ENCODE measurements at regions of chr5 and their contacts with region 1.

Region 1: DNA sequence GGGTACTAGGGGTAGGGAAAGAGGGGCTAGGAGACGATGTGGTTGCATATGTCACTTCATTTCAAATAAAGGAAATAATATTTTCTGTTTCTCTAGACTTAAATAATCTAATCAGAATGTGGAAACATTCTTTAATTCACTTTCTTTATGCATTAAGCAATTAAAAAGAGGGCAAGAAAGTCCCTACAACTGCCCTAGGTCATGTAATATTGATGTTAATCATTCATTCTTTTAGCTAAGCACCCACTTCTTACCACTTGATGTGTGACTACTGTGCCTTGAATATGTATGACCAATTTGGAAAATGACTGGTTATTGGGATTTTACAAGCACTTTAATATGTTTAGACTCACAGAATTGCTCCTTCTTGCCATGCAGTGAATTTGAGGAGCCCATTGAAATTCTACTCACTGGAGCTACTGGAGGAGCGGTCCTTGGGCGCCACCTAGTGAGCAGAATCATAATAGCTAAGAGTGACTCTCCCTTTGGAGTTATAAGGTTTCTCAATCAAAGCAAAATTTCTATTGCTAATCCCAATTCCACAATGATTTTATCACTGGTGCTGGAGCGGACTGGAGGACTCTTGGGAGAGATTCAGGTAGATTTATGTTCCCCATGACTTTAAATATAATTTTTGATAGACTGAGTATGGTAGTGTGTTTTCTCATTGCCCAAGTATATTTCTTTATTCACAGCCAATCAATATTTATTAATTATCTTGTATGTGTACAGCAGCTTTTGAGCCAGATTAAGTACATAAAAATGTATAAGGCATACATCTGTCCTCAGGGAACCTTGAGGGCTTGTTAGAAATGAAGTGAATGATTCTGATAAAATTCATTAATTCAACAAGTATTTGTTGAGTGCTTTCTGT is 225.1 kb downstream of the ADGRV1 start:
- DNase-seq: peak; percentile 44
- H3K4me3 ChIP-seq: no peak overlapping the region
- H3K27ac ChIP-seq: no peak overlapping the region
- H3K4me1 ChIP-seq: no peaks in the 10 kb centered on the region
- H3K27me3 ChIP-seq: no peaks in the 10 kb centered on the region
- CTCF ChIP-seq: peak; percentile 80 to 90

Region 2: DNA sequence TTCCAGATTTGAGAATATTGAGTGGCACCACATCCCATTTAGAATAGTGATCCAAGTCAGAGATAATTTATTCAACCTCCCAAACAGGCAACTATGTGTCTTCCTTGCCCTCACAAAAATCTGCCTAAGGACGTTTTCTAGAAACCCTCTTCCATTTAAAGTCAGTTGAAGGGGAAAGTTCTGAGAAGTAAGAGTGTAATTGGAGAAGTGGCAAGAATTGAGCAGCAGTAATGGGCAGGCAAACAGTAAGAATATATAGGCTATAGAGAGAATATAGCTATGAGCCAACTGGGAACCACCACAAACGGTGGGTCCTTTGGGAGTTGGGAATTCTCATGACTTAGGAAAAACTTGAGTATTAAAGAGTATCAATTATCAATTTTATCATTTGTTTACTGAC is 343.1 kb before region 1 on chr5:
- CTCF ChIA-PET with region 1: no interaction called
- dilution Hi-C with region 1: no loop called
- in situ Hi-C with region 1: no loop called
- intact Hi-C with region 1: loop called (anchors 1 kb)
- DNase-seq: no peak
- H3K4me3 ChIP-seq: no peak overlapping the region
- H3K27ac ChIP-seq: no peak overlapping the region
- H3K4me1 ChIP-seq: no peaks in the 10 kb centered on the region
- H3K27me3 ChIP-seq: no peaks in the 10 kb centered on the region
- CTCF ChIP-seq: no peak

Region 3: GRCh38 chr5:90606539-90606938 is 177.2 kb before region 1 on chr5:
- CTCF ChIA-PET with region 1: no interaction called
- dilution Hi-C with region 1: no loop called
- in situ Hi-C with region 1: no loop called
- intact Hi-C with region 1: loop called (anchors 5 kb)
- DNase-seq: peak; percentile 4
- H3K4me3 ChIP-seq: no peak overlapping the region
- H3K27ac ChIP-seq: no peak overlapping the region
- H3K4me1 ChIP-seq: no peaks in the 10 kb centered on the region
- H3K27me3 ChIP-seq: no peaks in the 10 kb centered on the region
- CTCF ChIP-seq: peak; percentile 51 to 55

Region 4: GRCh38 chr5:90709323-90710155 is 74.2 kb before region 1 on chr5:
- CTCF ChIA-PET with region 1: no interaction called
- dilution Hi-C with region 1: no loop called
- in situ Hi-C with region 1: no loop called
- intact Hi-C with region 1: loop called (anchors 1 kb)
- DNase-seq: peak; percentile 27
- H3K4me3 ChIP-seq: no peak overlapping the region
- H3K27ac ChIP-seq: no peak overlapping the region
- H3K4me1 ChIP-seq: no peaks in the 10 kb centered on the region
- H3K27me3 ChIP-seq: no peaks in the 10 kb centered on the region
- CTCF ChIP-seq: peak; percentile 64 to 86